Heart right ventricle (tissue), 16 donors: ENCODE measurements at regions of chr10 and their contacts with region 1.

Region 1: GRCh38 chr10:5434017-5434753 is 21.8 kb downstream of the NET1 start:
- DNase-seq: no peak
- ATAC-seq: peak in 3 of 8 donors; percentile 59 to 68 (median 61)
- H3K4me3 ChIP-seq: no peak overlapping the region
- H3K27ac ChIP-seq: no peak overlapping the region
- H3K4me1 ChIP-seq: no peaks in the 10 kb centered on the region
- H3K27me3 ChIP-seq: no peaks in the 10 kb centered on the region
- CTCF ChIP-seq: peak; percentile 26 to 79 (median 71)

Region 2: GRCh38 chr10:4819707-4820106 is 614.5 kb before region 1 on chr10:
- intact Hi-C with region 1: loop called in 1 of 10 experiments (anchors 5 kb)
- DNase-seq: no peak
- ATAC-seq: no peak
- H3K4me3 ChIP-seq: no peak overlapping the region
- H3K27ac ChIP-seq: no peak overlapping the region
- H3K4me1 ChIP-seq: peaks cover 0 to 10% (median 0%) of the 10 kb centered on the region in 9 donors
- H3K27me3 ChIP-seq: no peaks in the 10 kb centered on the region
- CTCF ChIP-seq: no peak